Sigmoid colon (tissue), 7 donors: ENCODE measurements at regions of chr7 and their contacts with region 1.

Region 1: DNA sequence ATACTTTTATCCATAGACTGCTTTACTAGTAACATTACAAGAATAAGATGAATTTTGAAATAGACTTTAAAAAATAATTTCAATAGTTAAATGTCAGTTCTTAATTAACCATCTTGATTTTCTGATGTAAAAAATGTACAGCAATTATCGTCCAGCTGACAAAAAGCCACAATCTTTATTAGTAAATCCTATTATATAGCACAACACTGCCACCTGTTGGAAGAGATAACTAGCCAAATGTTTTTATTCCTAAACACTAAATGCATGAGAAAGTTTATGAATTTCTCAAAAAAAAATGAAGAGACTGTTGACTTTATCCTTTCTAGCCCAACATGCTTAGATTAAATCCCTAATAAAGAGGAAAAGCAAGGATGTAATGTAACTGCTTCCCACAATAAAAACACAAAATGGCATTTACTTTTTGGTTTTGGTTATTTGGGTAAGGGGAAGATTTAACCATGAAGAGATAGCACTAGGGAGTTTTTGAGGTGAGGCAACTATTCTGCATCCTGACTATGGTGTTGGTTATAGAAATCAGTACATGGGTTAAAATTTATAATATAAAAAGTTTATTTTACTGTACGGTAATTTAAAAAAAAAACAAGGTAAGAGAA is 8.0 kb downstream of the COA1 start:
- DNase-seq: no peak
- H3K4me3 ChIP-seq: no peak overlapping the region
- H3K27ac ChIP-seq: no peak overlapping the region
- H3K4me1 ChIP-seq: peaks cover 0 to 29% (median 16%) of the 10 kb centered on the region in 4 donors
- H3K27me3 ChIP-seq: no peaks in the 10 kb centered on the region
- CTCF ChIP-seq: peak; percentile 27 to 67 (median 45)
- EP300 ChIP-seq: no peak
- POLR2A ChIP-seq: no peak

Region 2: GRCh38 chr7:43834463-43835251 is 113.4 kb after region 1 on chr7:
- intact Hi-C with region 1: loop called (anchors 1 kb)
- DNase-seq: no peak
- H3K4me3 ChIP-seq: peak overlapping the region in 1 of 4 donors; percentile 16
- H3K27ac ChIP-seq: no peak overlapping the region
- H3K4me1 ChIP-seq: peaks cover 0 to 5% (median 2%) of the 10 kb centered on the region in 4 donors
- H3K27me3 ChIP-seq: no peaks in the 10 kb centered on the region
- CTCF ChIP-seq: no peak
- EP300 ChIP-seq: no peak
- POLR2A ChIP-seq: no peak